ENCODE measurements at regions of chr13 and their contacts with region 1.

Region 1: GRCh38 chr13:50123862-50124536 is 108.8 kb downstream of the KCNRG start:
- DNase-seq: peak; percentile 97
- ATAC-seq: peak; percentile 72
- H3K4me3 ChIP-seq: peak overlapping the region; percentile 76
- H3K27ac ChIP-seq: peak overlapping the region; percentile 95
- H3K4me1 ChIP-seq: peaks cover 7% of the 10 kb centered on the region
- H3K27me3 ChIP-seq: no peaks in the 10 kb centered on the region
- CTCF ChIP-seq: 0 out of 2 replicates have a peak, but pooled peaks have one; percentile 13
- POLR2A ChIP-seq: peak; percentile 94
- RAD21 ChIP-seq: no peak; the same call in 1 of the 2 replicates

Region 2: DNA sequence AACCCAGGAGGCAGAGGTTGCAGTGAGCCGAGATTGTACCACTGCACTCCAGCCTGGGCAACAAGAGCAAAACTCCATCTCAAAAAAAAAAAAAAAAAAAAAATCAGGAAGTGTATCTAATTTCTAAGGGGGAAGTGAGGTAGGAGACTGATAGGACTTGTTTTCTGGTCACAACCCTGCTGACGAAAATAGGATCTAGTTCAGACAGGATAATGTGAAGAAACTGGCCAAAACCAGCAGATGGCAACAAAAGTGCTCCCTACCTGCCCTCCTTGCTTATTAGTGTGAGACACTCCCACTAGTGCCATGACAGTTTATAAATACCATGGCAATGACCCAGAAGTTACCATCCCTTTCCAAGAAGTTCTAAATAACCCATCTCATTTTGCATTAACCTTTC is 295.5 kb before region 1 on chr13:
- CTCF ChIA-PET with region 1: no interaction called
- POLR2A ChIA-PET with region 1: no interaction called
- dilution Hi-C with region 1: no loop called
- in situ Hi-C with region 1: no loop called
- intact Hi-C with region 1: no loop called
- DNase-seq: no peak
- ATAC-seq: no peak
- H3K4me3 ChIP-seq: no peak overlapping the region
- H3K27ac ChIP-seq: no peak overlapping the region
- H3K4me1 ChIP-seq: no peaks in the 10 kb centered on the region
- H3K27me3 ChIP-seq: peaks cover 4% of the 10 kb centered on the region
- CTCF ChIP-seq: no peak
- POLR2A ChIP-seq: no peak
- RAD21 ChIP-seq: no peak

Region 3: GRCh38 chr13:49996951-49997895 is 126.8 kb before region 1 on chr13 and contains the start of gene TRIM13:
- CTCF ChIA-PET with region 1: no interaction called
- POLR2A ChIA-PET with region 1: interaction called, 4 read pairs
- dilution Hi-C with region 1: no loop called
- in situ Hi-C with region 1: no loop called
- intact Hi-C with region 1: loop called (anchors 2 kb)
- DNase-seq: peak; percentile 88
- ATAC-seq: peak; percentile 87
- H3K4me3 ChIP-seq: peak within 1 kb of the TSS; percentile 87
- H3K27ac ChIP-seq: peak within 1 kb of the TSS; percentile 98
- H3K4me1 ChIP-seq: peaks cover 4% of the 10 kb centered on the region
- H3K27me3 ChIP-seq: no peaks in the 10 kb centered on the region
- CTCF ChIP-seq: peak; percentile 82
- POLR2A ChIP-seq: peak; percentile 87
- RAD21 ChIP-seq: peak; percentile 68
- total RNA-seq, gene TRIM13: 20.1 and 22.5 TPM in 2 replicates

Region 4: GRCh38 chr13:50387051-50387581 is 263.1 kb after region 1 on chr13:
- CTCF ChIA-PET with region 1: no interaction called
- POLR2A ChIA-PET with region 1: no interaction called
- dilution Hi-C with region 1: no loop called
- in situ Hi-C with region 1: no loop called
- intact Hi-C with region 1: loop called (anchors 2 kb)
- DNase-seq: peak; percentile 42
- ATAC-seq: peak; percentile 79
- H3K4me3 ChIP-seq: no peak overlapping the region
- H3K27ac ChIP-seq: peak overlapping the region; percentile 98
- H3K4me1 ChIP-seq: peaks cover 13% of the 10 kb centered on the region
- H3K27me3 ChIP-seq: no peaks in the 10 kb centered on the region
- CTCF ChIP-seq: peak; percentile 8; the same call in 1 of the 2 replicates
- POLR2A ChIP-seq: no peak
- RAD21 ChIP-seq: no peak; the same call in 1 of the 2 replicates

Region 5: GRCh38 chr13:50410921-50411712 is 287.1 kb after region 1 on chr13:
- CTCF ChIA-PET with region 1: no interaction called
- POLR2A ChIA-PET with region 1: no interaction called
- dilution Hi-C with region 1: no loop called
- in situ Hi-C with region 1: no loop called
- intact Hi-C with region 1: loop called (anchors 10 kb)
- DNase-seq: peak; percentile 86
- ATAC-seq: peak; percentile 93
- H3K4me3 ChIP-seq: no peak overlapping the region
- H3K27ac ChIP-seq: peak overlapping the region; percentile 69
- H3K4me1 ChIP-seq: peaks cover 17% of the 10 kb centered on the region
- H3K27me3 ChIP-seq: no peaks in the 10 kb centered on the region; the same call in 1 of the 2 replicates
- CTCF ChIP-seq: no peak
- POLR2A ChIP-seq: no peak
- RAD21 ChIP-seq: no peak